ENCODE measurements at regions of chr12 and their contacts with region 1.

Region 1: GRCh38 chr12:10140001-10140400 is 10.0 kb upstream of the CLEC7A start:
- DNase-seq: peak; percentile 25
- H3K4me3 Mint-ChIP-seq: no peak overlapping the region
- H3K27ac Mint-ChIP-seq: no peak overlapping the region
- H3K4me1 Mint-ChIP-seq: no peaks in the 10 kb centered on the region
- H3K27me3 Mint-ChIP-seq: peaks cover 46% of the 10 kb centered on the region

Region 2: GRCh38 chr12:10012630-10013330 is 127.2 kb before region 1 on chr12:
- intact Hi-C with region 1: loop called (anchors 1 kb)
- DNase-seq: no peak
- H3K4me3 Mint-ChIP-seq: no peak overlapping the region
- H3K27ac Mint-ChIP-seq: no peak overlapping the region
- H3K4me1 Mint-ChIP-seq: no peaks in the 10 kb centered on the region
- H3K27me3 Mint-ChIP-seq: peaks cover 33% of the 10 kb centered on the region

Region 3: GRCh38 chr12:10033783-10034545 is 106.0 kb before region 1 on chr12:
- intact Hi-C with region 1: loop called (anchors 1 kb)
- DNase-seq: no peak
- H3K4me3 Mint-ChIP-seq: no peak overlapping the region
- H3K27ac Mint-ChIP-seq: no peak overlapping the region
- H3K4me1 Mint-ChIP-seq: no peaks in the 10 kb centered on the region
- H3K27me3 Mint-ChIP-seq: peaks cover 8% of the 10 kb centered on the region

Region 4: GRCh38 chr12:10175846-10176636 is 36.0 kb after region 1 on chr12:
- intact Hi-C with region 1: no loop called
- DNase-seq: no peak
- H3K4me3 Mint-ChIP-seq: no peak overlapping the region
- H3K27ac Mint-ChIP-seq: no peak overlapping the region
- H3K4me1 Mint-ChIP-seq: no peaks in the 10 kb centered on the region
- H3K27me3 Mint-ChIP-seq: peaks cover 14% of the 10 kb centered on the region

Measured in activated T-helper 1 cell treated with anti-CD3 and anti-CD28 coated beads, Interleukin-12 subunit alpha, Interleukin-12 subunit beta, Interleukin-2, Interleukin-4 antibody, amounts not matched to agents 30 ng/mL and 10 ng/mL and 1 ng/mL, durations not matched to agents 14 hours and 24 hours and 36 hours (primary cell).